WTC11 (cell line): ENCODE measurements at regions of chr1 and their contacts with region 1.

Region 1: DNA sequence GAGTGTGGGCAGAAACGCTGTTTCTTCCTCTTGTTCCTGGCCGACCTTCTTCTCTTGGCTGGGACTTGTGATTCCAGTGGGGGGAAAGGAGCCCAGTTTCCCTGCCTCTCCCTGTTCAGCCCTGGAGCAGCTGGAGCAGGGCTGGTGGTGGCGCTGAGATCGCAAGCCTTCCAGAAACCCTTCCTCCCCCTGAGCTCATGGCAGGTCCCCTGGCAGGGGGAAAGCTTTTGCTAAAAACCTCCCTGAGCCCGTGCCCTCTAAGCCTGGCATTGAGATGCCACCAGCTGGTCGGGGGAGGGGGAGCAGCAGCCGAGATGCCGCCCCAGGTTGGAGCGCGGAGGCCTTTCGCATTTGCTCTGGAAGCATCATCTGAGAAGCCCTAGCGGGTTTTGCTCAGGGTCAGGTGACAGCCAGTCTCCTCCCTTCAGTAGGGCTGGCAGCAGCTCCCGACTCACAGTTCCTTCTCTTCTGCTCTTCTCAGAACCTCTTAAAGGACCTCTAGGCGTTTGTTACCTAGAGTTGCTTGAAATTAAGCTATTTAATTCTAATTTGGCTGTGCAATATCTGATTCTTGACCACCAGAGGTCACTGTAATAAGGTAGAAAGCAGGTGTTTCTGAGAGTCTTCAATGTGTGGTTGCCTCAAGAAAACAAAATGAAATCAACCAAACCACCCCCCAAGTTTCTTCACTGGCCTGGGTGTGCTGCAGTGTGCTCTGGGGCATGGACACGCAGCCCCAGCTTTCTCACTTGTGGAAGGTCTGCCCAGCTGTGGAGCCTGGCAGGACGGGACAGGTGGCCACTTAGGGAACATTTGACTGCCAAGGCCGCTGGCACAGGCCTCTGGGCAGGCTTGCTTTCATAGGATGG is 257.3 kb downstream of the CAMTA1 start:
- DNase-seq: peak; percentile 27
- ATAC-seq: peak; percentile 62
- H3K4me3 Mint-ChIP-seq: no peak overlapping the region
- H3K27ac Mint-ChIP-seq: no peak overlapping the region
- H3K4me1 Mint-ChIP-seq: peaks cover 24% of the 10 kb centered on the region
- H3K27me3 Mint-ChIP-seq: no peaks in the 10 kb centered on the region
- CTCF ChIP-seq: peak; percentile 57

Region 2: GRCh38 chr1:6891781-6892579 is 150.6 kb before region 1 on chr1:
- CTCF ChIA-PET with region 1: no interaction called
- POLR2A ChIA-PET with region 1: no interaction called
- DNase-seq: no peak
- ATAC-seq: no peak
- H3K4me3 Mint-ChIP-seq: no peak overlapping the region
- H3K27ac Mint-ChIP-seq: no peak overlapping the region
- H3K4me1 Mint-ChIP-seq: peaks cover 10% of the 10 kb centered on the region
- H3K27me3 Mint-ChIP-seq: no peaks in the 10 kb centered on the region
- CTCF ChIP-seq: no peak

Region 3: DNA sequence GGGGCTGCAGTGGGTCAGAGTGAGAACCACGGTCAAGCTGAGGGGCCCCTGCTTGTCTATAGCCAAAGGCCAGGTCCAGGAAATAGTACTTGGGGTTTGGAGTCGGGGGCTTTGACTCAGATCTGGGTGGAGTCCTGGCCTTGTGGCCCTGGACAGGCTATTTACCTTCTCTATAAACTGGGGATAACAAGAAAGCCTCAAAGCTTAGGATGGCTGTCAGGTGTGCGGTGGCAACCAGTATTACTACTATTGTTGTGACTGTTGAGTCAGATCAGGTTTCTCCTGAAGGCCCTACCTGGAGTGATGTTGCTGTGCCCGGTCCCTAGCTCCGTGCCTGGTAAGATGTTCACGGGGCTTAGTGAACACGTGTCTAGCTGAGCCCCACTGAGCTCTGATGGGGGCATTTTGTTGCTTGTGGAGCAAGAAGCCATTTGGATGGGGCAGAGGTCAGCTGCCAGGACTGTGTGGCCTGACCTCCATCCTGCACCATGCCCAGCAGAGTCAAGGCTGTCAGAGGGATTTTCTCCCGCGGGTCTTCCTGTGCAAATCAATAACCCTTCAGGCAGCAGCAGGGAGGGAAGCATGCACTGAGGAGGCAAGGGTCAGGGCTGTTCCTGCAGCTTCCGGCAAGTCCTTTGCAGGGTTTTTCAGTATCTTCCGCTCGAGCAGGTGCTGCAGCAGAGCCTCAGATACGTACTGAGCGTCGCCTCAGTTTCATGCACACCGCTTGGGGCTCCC is 87.0 kb before region 1 on chr1:
- CTCF ChIA-PET with region 1: interaction called, 11 read pairs
- POLR2A ChIA-PET with region 1: no interaction called
- DNase-seq: no peak
- ATAC-seq: no peak
- H3K4me3 Mint-ChIP-seq: no peak overlapping the region
- H3K27ac Mint-ChIP-seq: no peak overlapping the region
- H3K4me1 Mint-ChIP-seq: peaks cover 37% of the 10 kb centered on the region
- H3K27me3 Mint-ChIP-seq: peaks cover 2% of the 10 kb centered on the region; the same call in 1 of the 2 replicates
- CTCF ChIP-seq: no peak

Region 4: GRCh38 chr1:6979003-6979613 is 63.4 kb before region 1 on chr1:
- CTCF ChIA-PET with region 1: interaction called, 16 read pairs
- POLR2A ChIA-PET with region 1: no interaction called
- DNase-seq: no peak
- ATAC-seq: peak; percentile 72
- H3K4me3 Mint-ChIP-seq: peak overlapping the region; percentile 2; the same call in 1 of the 2 replicates
- H3K27ac Mint-ChIP-seq: peak overlapping the region; percentile 41
- H3K4me1 Mint-ChIP-seq: peaks cover 40% of the 10 kb centered on the region
- H3K27me3 Mint-ChIP-seq: no peaks in the 10 kb centered on the region
- CTCF ChIP-seq: no peak

Region 5: GRCh38 chr1:6998267-6998666 is 44.3 kb before region 1 on chr1:
- CTCF ChIA-PET with region 1: interaction called, 13 read pairs
- POLR2A ChIA-PET with region 1: no interaction called
- DNase-seq: peak; percentile 47
- ATAC-seq: peak; percentile 94
- H3K4me3 Mint-ChIP-seq: no peak overlapping the region
- H3K27ac Mint-ChIP-seq: no peak overlapping the region
- H3K4me1 Mint-ChIP-seq: peaks cover 26% of the 10 kb centered on the region
- H3K27me3 Mint-ChIP-seq: no peaks in the 10 kb centered on the region
- CTCF ChIP-seq: no peak

Region 6: GRCh38 chr1:7026169-7026568 is 16.4 kb before region 1 on chr1:
- CTCF ChIA-PET with region 1: interaction called, 21 read pairs
- POLR2A ChIA-PET with region 1: no interaction called
- DNase-seq: no peak
- ATAC-seq: no peak
- H3K4me3 Mint-ChIP-seq: no peak overlapping the region
- H3K27ac Mint-ChIP-seq: no peak overlapping the region
- H3K4me1 Mint-ChIP-seq: peaks cover 15% of the 10 kb centered on the region
- H3K27me3 Mint-ChIP-seq: no peaks in the 10 kb centered on the region; the same call in 1 of the 2 replicates
- CTCF ChIP-seq: no peak

Region 7: GRCh38 chr1:7070389-7071029 is 28.0 kb after region 1 on chr1:
- CTCF ChIA-PET with region 1: interaction called, 129 read pairs
- POLR2A ChIA-PET with region 1: no interaction called
- DNase-seq: peak; percentile 81
- ATAC-seq: peak; percentile 88
- H3K4me3 Mint-ChIP-seq: peak overlapping the region; percentile 70
- H3K27ac Mint-ChIP-seq: no peak overlapping the region
- H3K4me1 Mint-ChIP-seq: peaks cover 9% of the 10 kb centered on the region
- H3K27me3 Mint-ChIP-seq: peaks cover 4% of the 10 kb centered on the region; the same call in 1 of the 2 replicates
- CTCF ChIP-seq: peak; percentile 88

Region 8: GRCh38 chr1:7117599-7118281 is 75.2 kb after region 1 on chr1:
- CTCF ChIA-PET with region 1: interaction called, 14 read pairs
- POLR2A ChIA-PET with region 1: no interaction called
- DNase-seq: peak; percentile 55
- ATAC-seq: peak; percentile 96
- H3K4me3 Mint-ChIP-seq: no peak overlapping the region; the same call in 1 of the 2 replicates
- H3K27ac Mint-ChIP-seq: peak overlapping the region; percentile 86
- H3K4me1 Mint-ChIP-seq: peaks cover 21% of the 10 kb centered on the region
- H3K27me3 Mint-ChIP-seq: no peaks in the 10 kb centered on the region
- CTCF ChIP-seq: no peak

Region 9: GRCh38 chr1:7186382-7187109 is 144.0 kb after region 1 on chr1:
- CTCF ChIA-PET with region 1: no interaction called
- POLR2A ChIA-PET with region 1: no interaction called
- DNase-seq: peak; percentile 23
- ATAC-seq: peak; percentile 36; the same call in 1 of the 2 replicates
- H3K4me3 Mint-ChIP-seq: no peak overlapping the region
- H3K27ac Mint-ChIP-seq: no peak overlapping the region
- H3K4me1 Mint-ChIP-seq: no peaks in the 10 kb centered on the region; the same call in 1 of the 2 replicates
- H3K27me3 Mint-ChIP-seq: no peaks in the 10 kb centered on the region
- CTCF ChIP-seq: peak; percentile 19; the same call in 1 of the 2 replicates